H1 (cell line): ENCODE measurements at regions of chr11 and their contacts with region 1.

Region 1: DNA sequence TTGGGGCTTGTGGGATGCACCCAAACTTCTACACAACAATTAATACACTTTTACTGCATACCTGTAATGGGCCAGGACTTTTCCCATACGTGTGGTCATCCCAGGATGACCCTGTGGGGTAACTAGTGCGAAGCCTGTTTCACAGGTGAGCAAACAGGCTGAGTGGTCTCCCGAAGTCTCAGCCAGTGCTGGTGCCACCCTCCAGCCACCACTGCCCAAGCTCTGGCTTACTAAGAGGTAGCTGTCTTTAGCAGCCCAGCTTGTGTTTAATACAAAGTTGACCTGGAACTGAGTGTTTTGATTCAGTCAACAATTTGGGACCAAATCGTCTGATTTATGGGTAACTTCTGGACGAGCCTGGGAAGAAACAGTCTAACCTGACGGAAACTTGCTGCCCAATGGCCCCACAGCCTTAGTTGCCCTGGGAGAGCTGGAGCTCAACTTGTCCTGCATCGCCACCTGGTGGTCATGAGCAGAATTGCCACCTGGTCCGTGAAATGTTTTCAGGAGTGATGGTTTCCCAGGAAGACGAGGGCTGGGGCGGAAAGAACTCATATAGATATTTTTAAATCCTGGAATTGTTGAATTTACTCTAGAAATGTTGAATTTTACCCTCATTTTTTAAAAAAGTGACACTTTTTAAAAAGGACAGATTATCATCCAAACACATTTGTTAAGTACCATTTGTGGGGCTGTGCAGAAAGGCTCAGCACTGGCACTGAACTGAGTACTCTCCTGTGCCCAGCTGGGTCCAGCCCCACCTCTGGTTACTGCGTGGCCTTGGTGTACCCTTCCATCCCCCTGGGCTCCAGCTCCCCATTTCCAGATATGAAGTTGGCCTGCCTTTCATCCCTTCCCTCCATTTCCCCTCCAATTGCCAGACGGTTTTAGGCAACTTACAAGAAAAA is 95.5 kb upstream of the PARVA start:
- DNase-seq: peak; percentile 57 to 94
- H3K4me3 ChIP-seq: no peak overlapping the region
- H3K27ac ChIP-seq: no peak overlapping the region
- H3K4me1 ChIP-seq: peaks cover 0 to 6% (median 0%) of the 10 kb centered on the region in 4 experiments; a peak in 1 of 7 replicates
- H3K27me3 ChIP-seq: no peaks in the 10 kb centered on the region
- CTCF ChIP-seq: peak; percentile 94 to 95 (median 94)
- EP300 ChIP-seq: no peak
- POLR2A ChIP-seq: no peak
- RAD21 ChIP-seq: peak; percentile 100

Region 2: DNA sequence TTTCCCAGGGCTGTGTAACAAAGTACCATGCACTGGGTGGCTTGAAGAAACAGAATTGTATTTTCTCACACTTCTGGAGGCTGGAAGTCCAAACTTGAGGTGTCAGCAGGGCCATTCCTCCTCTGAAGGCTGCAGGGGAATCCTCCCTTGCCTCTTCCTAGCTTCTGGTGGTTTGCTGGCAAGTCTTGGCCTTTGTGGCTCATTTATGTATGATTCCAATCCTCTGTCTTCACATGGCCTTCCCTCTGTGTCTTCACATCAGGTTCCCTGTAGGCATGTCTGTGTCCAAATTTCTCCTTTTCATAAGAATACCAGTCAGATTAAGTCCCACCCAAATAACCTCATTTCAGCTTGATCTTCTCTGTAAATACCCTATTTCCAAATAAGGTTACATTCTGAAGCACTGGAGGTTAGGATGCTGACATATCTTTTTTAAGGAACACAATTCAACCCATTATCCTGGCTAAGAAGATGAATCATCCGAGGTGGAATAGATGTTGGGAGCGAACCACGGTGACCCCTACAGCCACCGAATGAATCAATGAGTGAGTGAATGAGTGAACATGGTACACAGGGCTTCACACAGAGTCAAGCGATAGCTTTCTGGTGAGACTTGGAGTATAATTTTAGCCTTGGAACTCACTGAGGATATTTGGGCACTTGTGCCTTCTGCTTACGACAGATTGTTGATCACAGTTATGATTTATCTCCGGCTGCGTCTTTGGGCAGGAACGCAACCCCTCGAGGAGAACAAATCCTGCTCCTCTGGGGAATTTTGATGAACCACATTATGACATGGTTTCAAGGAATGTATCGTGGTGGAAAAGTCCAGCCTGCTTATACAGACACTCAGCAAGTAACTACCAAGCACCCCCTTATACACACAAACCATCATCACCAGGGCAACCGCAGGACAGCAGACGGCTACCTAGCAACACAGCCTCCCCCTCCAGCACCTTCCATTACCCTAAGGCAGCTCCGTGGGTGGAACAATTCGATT is 205.7 kb before region 1 on chr11:
- CTCF ChIA-PET with region 1: interaction called, 10 read pairs
- POLR2A ChIA-PET with region 1: no interaction called
- DNase-seq: no peak
- H3K4me3 ChIP-seq: no peak overlapping the region
- H3K27ac ChIP-seq: no peak overlapping the region
- H3K4me1 ChIP-seq: no peaks in the 10 kb centered on the region
- H3K27me3 ChIP-seq: no peaks in the 10 kb centered on the region
- CTCF ChIP-seq: no peak
- EP300 ChIP-seq: no peak
- POLR2A ChIP-seq: no peak
- RAD21 ChIP-seq: no peak

Region 3: DNA sequence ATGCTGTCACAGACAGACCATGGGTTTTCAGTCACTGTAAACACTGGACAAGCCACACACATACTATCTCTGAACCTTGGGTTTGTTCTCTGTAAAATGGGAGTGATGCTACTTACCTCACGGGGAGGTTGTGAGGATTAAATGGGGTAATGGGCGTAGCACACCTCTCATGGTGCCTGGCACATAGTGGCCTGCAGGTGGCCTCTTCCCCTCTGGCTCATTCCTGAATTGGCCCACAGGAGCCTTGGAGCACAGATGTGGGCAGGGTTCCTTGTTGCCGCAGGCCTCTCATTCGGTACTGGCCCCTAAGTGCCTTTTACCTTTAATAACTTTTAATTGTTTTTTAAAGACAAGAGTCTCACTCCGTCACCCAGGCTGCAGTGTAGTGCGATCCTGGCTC is 159.7 kb before region 1 on chr11:
- CTCF ChIA-PET with region 1: interaction called, 26 read pairs
- POLR2A ChIA-PET with region 1: no interaction called
- DNase-seq: peak in 1 of 2 experiments; percentile 58
- H3K4me3 ChIP-seq: no peak overlapping the region
- H3K27ac ChIP-seq: no peak overlapping the region
- H3K4me1 ChIP-seq: no peaks in the 10 kb centered on the region
- H3K27me3 ChIP-seq: 0 out of 7 replicates have a peak, but pooled peaks cover 0 to 3% (median 0%) of the 10 kb centered on the region in 4 experiments
- CTCF ChIP-seq: peak; percentile 81 to 93 (median 87)
- EP300 ChIP-seq: no peak
- POLR2A ChIP-seq: no peak
- RAD21 ChIP-seq: peak; percentile 72 to 80

Region 4: GRCh38 chr11:12260731-12261521 is 20.9 kb before region 1 on chr11:
- CTCF ChIA-PET with region 1: interaction called, 10 read pairs
- POLR2A ChIA-PET with region 1: no interaction called
- DNase-seq: no peak
- H3K4me3 ChIP-seq: no peak overlapping the region
- H3K27ac ChIP-seq: no peak overlapping the region
- H3K4me1 ChIP-seq: peaks cover 0 to 4% (median 0%) of the 10 kb centered on the region in 4 experiments; a peak in 1 of 7 replicates
- H3K27me3 ChIP-seq: no peaks in the 10 kb centered on the region
- CTCF ChIP-seq: no peak
- EP300 ChIP-seq: no peak
- POLR2A ChIP-seq: no peak
- RAD21 ChIP-seq: no peak